HEK293 (cell line): ENCODE measurements at regions of chr1 and their contacts with region 1.

Region 1: GRCh38 chr1:18902523-18903290 is at the start of gene ALDH4A1:
- H3K4me3 ChIP-seq: peak within 1 kb of the TSS; percentile 58
- H3K27ac ChIP-seq: peak within 1 kb of the TSS; percentile 70
- H3K4me1 ChIP-seq: 0 out of 2 replicates have a peak, but pooled peaks cover 3% of the 10 kb centered on the region
- CTCF ChIP-seq: no peak

Region 2: GRCh38 chr1:18693256-18694098 is 209.2 kb before region 1 on chr1:
- CTCF ChIA-PET with region 1: no interaction called
- POLR2A ChIA-PET with region 1: no interaction called
- H3K4me3 ChIP-seq: no peak overlapping the region
- H3K27ac ChIP-seq: no peak overlapping the region
- H3K4me1 ChIP-seq: no peaks in the 10 kb centered on the region
- CTCF ChIP-seq: no peak

Region 3: DNA sequence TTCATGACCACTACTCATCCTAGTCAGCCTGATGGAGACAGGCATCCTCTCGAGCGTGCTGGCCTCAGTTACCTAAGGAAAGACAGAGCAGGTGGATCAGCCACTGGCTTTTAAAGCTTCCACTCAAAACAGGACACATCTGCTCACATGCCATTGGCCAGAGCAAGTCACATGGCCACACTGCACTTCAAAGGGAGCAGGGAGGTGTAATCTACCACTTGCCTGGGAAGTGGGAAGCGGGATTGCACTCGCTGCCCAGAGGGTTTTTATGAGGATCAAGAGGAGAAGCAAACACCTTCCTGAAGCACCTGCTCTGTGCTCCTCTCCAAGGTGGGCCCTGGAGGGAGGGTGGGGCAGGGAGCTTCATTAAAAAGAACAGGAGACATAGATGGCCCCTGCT is 151.3 kb before region 1 on chr1:
- CTCF ChIA-PET with region 1: no interaction called
- POLR2A ChIA-PET with region 1: no interaction called
- H3K4me3 ChIP-seq: no peak overlapping the region
- H3K27ac ChIP-seq: no peak overlapping the region
- H3K4me1 ChIP-seq: no peaks in the 10 kb centered on the region
- CTCF ChIP-seq: no peak

Region 4: DNA sequence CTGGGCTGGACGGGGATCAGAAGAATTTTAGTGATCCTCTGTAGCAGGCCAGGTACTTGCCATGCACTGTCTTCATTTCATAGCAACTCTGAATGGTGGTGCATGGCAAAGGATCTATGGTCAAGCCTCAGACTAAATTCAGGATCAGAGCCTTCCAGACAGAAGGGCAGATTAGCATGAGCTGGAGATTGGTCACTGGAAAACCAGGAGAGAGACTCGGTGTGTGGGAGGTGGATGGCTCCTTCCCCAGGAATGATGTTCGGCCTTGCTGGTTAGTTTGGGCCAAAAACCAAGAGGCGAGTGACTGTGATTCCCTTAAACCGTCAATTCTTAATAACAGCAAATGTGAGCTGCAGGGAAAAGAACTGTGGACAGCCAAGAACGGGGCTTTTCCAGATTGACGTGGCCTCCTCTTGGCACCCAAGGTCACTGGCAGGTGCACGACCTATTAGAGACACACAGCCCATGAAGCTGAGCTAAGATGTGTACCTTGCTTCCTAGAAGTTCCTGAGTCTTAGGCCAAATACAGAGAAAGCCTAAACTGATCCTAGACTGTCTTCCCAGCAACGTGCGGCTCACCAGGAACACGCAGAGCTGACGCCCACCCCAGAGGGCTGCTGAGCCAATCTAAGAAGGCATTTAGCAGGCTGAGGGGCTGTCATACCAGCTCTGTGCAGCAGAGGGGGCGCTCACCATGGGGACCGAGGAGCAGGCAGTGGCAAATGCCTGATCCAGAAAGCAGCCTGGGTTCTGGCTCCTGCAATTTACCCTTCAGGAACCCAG is 18.9 kb before region 1 on chr1:
- CTCF ChIA-PET with region 1: interaction called, 29 read pairs
- POLR2A ChIA-PET with region 1: interaction called, 7 read pairs
- H3K4me3 ChIP-seq: no peak overlapping the region
- H3K27ac ChIP-seq: no peak overlapping the region
- H3K4me1 ChIP-seq: 0 out of 2 replicates have a peak, but pooled peaks cover 2% of the 10 kb centered on the region
- CTCF ChIP-seq: peak; percentile 76

Region 5: DNA sequence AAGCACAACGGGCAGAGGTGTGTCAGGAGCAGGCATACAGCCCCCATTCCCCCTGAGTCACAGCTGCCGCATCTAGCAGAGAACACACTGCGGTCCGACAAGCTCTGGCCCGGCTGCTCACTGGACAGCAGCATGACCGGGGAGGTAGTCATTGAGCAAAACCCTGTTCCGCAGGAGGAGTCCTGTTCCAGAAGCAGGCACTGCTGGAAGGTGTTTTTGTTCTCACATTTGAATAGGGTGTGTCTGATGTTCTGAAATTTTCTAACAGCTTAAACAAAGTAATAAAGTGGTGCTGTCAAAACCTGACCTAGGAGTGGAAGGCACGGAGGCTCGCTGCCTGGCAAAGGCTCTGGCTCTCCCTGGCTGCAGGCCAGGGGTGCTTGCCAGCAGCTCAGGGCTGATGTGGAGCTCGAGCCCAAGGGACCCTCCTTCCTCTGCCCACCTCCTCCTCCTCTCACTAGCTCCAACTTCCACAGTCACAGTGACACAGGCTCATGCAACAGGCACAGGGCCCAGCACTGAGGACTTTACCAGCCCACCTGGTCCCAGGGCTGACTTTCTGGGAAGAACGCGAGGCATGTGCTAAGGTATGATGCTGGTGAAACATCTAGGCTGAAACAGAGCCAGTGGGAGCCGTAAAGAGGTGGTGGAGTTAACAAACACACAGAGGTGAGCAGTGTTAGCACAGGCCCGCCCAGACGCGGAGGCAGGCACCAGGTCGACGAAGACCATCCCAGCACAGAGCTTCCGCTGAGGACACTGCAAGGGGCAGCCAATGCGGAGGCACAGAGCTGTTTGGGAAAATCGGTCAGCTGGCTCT is 172.4 kb after region 1 on chr1:
- CTCF ChIA-PET with region 1: interaction called, 10 read pairs
- POLR2A ChIA-PET with region 1: no interaction called
- H3K4me3 ChIP-seq: no peak overlapping the region
- H3K27ac ChIP-seq: no peak overlapping the region
- H3K4me1 ChIP-seq: no peaks in the 10 kb centered on the region
- CTCF ChIP-seq: no peak

Region 6: DNA sequence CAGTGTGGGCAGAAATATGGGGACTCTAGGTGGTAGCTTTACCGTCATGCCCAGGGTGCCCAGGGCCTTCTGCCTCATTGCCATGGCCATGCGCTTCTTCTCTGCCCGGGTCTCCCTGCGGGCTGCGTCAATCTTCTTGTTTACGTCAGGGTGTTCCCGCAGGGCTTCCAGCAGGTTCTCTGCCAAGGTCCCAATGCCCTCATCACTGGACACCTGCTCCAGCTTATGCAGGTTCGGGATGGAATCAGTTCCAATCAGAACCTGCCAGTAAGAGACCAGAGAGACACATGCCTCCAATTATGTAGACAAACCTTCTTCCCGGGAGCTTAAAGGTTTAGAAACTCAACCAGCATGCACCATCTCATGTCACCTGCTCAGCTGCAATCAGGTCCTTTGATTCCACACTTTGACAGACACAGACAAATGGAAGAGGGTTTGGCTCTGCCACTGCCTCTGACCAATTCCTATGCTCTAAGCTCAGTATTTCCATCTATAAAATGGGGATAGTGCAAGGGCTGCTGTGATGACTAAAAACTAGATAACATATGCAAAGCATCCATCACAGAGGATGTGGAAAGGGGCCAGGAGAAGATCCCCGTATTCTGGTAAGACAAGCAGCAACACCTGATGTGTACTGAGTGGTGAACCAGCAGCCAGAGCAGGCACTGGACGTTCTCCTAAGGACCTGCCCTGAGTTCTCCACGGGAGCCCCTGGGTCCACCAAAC is 186.2 kb after region 1 on chr1:
- CTCF ChIA-PET with region 1: interaction called, 11 read pairs
- POLR2A ChIA-PET with region 1: interaction called, 3 read pairs
- H3K4me3 ChIP-seq: no peak overlapping the region
- H3K27ac ChIP-seq: no peak overlapping the region
- H3K4me1 ChIP-seq: no peaks in the 10 kb centered on the region
- CTCF ChIP-seq: no peak

Region 7: DNA sequence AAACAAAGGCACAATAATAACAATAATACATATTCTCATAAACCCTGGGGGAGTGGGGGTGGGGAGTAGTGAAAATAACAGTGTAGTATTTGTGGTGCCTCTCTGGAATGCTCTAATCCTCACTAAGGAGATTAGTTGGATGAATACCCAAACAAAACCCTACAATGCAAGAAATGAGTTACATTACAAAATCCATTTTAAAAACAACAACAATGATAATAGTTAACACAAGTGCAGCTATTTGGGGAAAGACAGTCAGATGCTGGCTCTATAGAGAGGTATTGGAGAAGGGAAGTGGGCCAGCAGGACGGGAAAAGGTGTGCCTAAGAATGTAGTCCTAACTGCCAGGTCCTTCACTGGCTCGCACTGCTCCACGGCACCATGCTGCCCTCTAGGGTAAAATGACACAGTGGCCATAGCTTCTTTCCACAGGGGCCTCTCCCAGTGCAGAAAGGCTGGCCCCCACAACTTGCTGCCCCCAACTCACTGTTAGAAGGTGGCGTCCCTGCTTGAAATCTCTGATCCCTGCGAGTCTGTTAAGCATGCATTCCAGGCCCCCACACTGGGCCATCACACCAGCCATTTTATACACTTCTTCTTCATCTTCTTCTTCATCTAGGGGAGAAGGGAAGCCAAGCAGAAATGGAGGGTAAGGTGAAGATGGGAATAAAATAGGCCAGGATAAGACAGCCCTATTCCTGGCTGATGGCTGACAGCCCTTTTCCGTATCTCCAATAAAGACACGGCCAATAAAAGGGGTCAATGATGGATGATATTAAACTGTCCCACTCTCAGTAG is 193.5 kb after region 1 on chr1:
- CTCF ChIA-PET with region 1: interaction called, 34 read pairs
- POLR2A ChIA-PET with region 1: no interaction called
- H3K4me3 ChIP-seq: no peak overlapping the region
- H3K27ac ChIP-seq: no peak overlapping the region
- H3K4me1 ChIP-seq: no peaks in the 10 kb centered on the region
- CTCF ChIP-seq: peak; percentile 35; the same call in 1 of the 2 replicates

Region 8: GRCh38 chr1:19113697-19114092 is 211.0 kb after region 1 on chr1:
- CTCF ChIA-PET with region 1: interaction called, 27 read pairs
- POLR2A ChIA-PET with region 1: interaction called, 3 read pairs
- H3K4me3 ChIP-seq: no peak overlapping the region
- H3K27ac ChIP-seq: no peak overlapping the region
- H3K4me1 ChIP-seq: no peaks in the 10 kb centered on the region
- CTCF ChIP-seq: peak; percentile 44; the same call in 1 of the 2 replicates